Head of caudate nucleus (tissue), 42 donors: ENCODE measurements at regions of chr17 and their contacts with region 1.

Region 1: GRCh38 chr17:65556014-65556909 is 5.2 kb downstream of the AXIN2 start:
- DNase-seq: peak; percentile 66 to 93 (median 86)

Region 2: DNA sequence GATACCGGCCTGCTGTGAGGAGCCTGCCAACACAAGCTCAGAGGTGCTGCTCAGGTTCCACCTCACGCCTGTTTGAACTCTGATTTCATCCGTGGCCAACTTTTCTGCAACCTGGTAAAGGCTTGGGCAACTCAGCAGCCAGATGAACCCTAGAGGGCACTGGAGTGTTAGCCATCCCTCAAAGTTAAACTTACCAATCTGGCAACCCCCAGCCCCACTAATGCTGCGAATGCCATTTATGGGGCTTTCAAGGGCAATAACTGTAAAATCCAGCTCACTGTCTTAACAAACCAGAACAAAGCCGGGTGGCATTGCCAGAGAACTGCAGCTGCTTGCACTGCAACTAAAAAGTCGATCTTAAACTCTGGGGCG is 100.3 kb before region 1 on chr17:
- intact Hi-C with region 1: loop called (anchors 10 kb)
- DNase-seq: peak in 10 of 42 donors; percentile 11 to 43 (median 26)

Region 3: GRCh38 chr17:65618516-65618915 is 62.3 kb after region 1 on chr17:
- intact Hi-C with region 1: no loop called
- DNase-seq: no peak